ENCODE measurements at regions of chr11 and their contacts with region 1.

Region 1: DNA sequence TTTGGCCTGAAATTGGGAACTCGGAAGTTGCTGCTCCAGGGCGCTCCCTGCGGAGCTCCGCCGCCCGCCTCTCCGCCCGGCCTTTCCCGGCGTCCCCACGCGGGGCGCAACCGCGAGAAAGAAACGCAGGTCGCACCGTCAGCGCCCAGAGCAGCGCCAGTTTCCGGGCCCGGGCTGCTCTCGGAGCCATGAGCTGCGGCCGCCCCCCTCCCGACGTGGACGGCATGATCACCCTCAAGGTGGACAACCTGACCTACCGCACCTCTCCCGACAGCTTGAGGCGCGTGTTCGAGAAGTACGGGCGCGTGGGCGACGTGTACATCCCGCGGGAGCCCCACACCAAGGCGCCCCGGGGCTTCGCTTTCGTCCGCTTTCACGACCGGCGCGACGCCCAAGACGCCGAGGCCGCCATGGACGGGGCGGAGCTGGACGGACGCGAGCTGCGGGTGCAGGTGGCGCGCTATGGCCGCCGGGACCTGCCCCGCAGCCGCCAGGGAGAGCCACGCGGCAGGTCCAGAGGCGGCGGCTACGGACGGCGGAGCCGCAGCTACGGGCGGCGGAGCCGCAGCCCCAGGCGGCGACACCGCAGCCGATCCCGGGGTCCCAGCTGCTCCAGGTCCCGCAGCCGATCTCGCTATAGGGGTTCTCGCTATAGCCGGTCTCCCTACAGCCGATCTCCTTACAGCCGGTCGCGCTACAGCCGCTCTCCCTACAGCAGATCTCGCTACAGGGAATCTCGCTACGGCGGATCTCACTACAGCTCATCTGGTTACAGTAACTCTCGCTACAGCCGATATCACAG is 521 bp downstream of the SRSF8 start:
- DNase-seq: peak; percentile 53 to 88 (median 69)
- ATAC-seq: peak; percentile 63
- H3K4me3 ChIP-seq: peak overlapping the region; percentile 95
- H3K4me3 Mint-ChIP-seq: peak overlapping the region; percentile 98
- H3K27ac ChIP-seq: peak overlapping the region; percentile 87 to 90
- H3K27ac Mint-ChIP-seq: peak overlapping the region; percentile 99
- H3K4me1 ChIP-seq: peaks cover 12% of the 10 kb centered on the region
- H3K4me1 Mint-ChIP-seq: peaks cover 38% of the 10 kb centered on the region
- H3K27me3 ChIP-seq: no peaks in the 10 kb centered on the region
- H3K27me3 Mint-ChIP-seq: no peaks in the 10 kb centered on the region
- CTCF ChIP-seq: peak; percentile 60

Region 2: DNA sequence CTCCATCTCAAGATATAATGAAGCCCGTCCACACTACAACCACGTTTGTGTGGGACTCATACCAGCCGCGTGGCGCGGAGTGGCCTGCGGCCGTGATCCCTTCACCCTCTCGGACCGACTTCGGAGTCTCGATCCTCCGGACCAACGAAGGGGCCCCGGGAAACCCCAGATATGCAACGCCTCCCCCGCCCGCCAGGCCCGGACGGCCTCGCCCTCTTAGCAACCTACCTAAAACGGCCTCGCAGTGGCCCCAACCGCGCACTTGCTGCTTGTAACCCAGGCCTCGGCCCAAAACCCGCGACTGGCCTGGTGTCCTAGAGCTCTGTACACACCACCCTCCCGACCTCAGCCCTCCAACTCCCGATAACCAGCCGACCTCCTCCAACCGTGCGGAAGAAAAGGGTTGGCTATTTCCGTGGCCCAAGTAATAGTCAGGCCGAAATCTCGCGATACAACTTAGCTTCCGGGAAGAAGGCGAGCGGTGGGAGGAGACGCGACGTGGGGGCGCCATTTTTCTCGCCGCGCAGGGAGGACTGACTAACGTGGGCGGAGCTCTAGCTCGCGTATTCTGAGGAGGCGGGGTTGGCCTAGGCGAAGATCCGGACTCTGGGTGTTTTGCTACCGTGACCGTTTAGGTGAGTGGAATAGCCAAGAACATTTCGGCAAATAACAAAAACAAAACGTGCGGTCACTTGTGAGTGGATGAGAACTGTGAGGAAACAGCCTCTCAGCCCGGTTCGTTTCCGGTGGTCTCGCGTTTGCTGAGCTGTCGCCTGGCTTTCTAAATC is 1326.0 kb before region 1 on chr11 and contains the starts of genes C11orf54 and TAF1D:
- CTCF ChIA-PET with region 1: no interaction called
- POLR2A ChIA-PET with region 1: interaction called, 14 read pairs
- intact Hi-C with region 1: no loop called
- DNase-seq: peak; percentile 92 to 99 (median 96)
- ATAC-seq: peak; percentile 90
- H3K4me3 ChIP-seq: peak within 1 kb of the TSS; percentile 88
- H3K4me3 Mint-ChIP-seq: peak within 1 kb of the TSS; percentile 98
- H3K27ac ChIP-seq: peak within 1 kb of the TSS; percentile 95 to 97
- H3K27ac Mint-ChIP-seq: peak within 1 kb of the TSS; percentile 98
- H3K4me1 ChIP-seq: peaks cover 22% of the 10 kb centered on the region
- H3K4me1 Mint-ChIP-seq: peaks cover 76% of the 10 kb centered on the region
- H3K27me3 ChIP-seq: no peaks in the 10 kb centered on the region
- H3K27me3 Mint-ChIP-seq: no peaks in the 10 kb centered on the region
- CTCF ChIP-seq: no peak
- total RNA-seq, gene C11orf54: 6.8 to 8.0 TPM
- total RNA-seq, gene TAF1D: 161 to 173 TPM

Region 3: DNA sequence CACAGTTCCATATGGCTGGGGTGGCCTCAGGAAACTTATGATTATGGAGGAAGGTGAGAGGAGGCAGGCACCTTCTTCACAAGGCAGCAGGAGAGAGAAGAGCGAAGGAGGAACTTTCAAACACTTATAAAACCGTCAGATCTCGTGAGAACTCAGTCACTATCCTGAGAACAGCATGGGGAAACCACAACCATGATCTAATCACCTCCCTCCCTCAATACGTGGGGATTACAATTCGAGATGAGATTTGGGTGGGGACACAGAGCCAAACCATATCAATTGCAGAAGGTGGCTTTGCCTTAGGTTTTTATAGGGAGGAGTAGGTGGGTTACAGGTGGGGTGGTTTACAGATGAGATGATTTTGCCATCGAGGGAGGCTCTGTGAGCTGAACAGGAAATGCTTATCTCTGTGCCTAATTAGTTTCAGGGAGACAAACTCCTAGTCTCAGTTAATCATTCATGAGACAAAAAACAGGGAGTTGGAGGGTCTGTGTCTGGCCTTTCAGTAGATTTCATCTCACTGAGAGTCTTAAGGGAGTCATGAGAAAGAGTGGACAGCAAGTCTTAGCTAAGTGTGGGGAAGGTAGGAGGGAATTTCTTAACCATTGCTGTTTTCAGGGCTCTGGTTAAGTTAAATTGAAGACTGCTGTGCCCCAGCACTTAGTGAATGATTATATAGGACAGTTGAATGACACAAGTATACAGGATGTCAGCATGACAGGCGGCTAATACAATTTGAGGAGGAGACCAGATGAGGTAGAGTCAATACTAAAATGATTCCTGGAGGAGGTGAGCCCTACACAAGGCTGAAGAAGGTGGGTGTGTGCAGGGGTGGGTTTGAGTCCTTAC is 141.6 kb before region 1 on chr11:
- CTCF ChIA-PET with region 1: no interaction called
- POLR2A ChIA-PET with region 1: interaction called, 28 read pairs
- intact Hi-C with region 1: no loop called
- DNase-seq: peak in 2 of 14 experiments; percentile 20 to 35
- ATAC-seq: peak; percentile 27
- H3K4me3 ChIP-seq: no peak overlapping the region
- H3K4me3 Mint-ChIP-seq: peak overlapping the region; percentile 47
- H3K27ac ChIP-seq: peak overlapping the region in 1 of 2 donors; percentile 71
- H3K27ac Mint-ChIP-seq: peak overlapping the region; percentile 91
- H3K4me1 ChIP-seq: peaks cover 44% of the 10 kb centered on the region
- H3K4me1 Mint-ChIP-seq: peaks cover 73% of the 10 kb centered on the region
- H3K27me3 ChIP-seq: no peaks in the 10 kb centered on the region
- H3K27me3 Mint-ChIP-seq: no peaks in the 10 kb centered on the region
- CTCF ChIP-seq: no peak

Region 4: GRCh38 chr11:95089620-95090542 is 22.6 kb after region 1 on chr11 and contains the start of gene ENDOD1:
- CTCF ChIA-PET with region 1: interaction called, 67 read pairs
- POLR2A ChIA-PET with region 1: interaction called, 266 read pairs
- intact Hi-C with region 1: loop called (anchors 1 kb)
- DNase-seq: peak; percentile 70 to 94 (median 84)
- ATAC-seq: peak; percentile 94
- H3K4me3 ChIP-seq: peak within 1 kb of the TSS; percentile 78
- H3K4me3 Mint-ChIP-seq: peak within 1 kb of the TSS; percentile 92
- H3K27ac ChIP-seq: peak within 1 kb of the TSS; percentile 77 to 84
- H3K27ac Mint-ChIP-seq: peak within 1 kb of the TSS; percentile 95
- H3K4me1 ChIP-seq: peaks cover 34% of the 10 kb centered on the region
- H3K4me1 Mint-ChIP-seq: peaks cover 50% of the 10 kb centered on the region
- H3K27me3 ChIP-seq: no peaks in the 10 kb centered on the region
- H3K27me3 Mint-ChIP-seq: no peaks in the 10 kb centered on the region
- CTCF ChIP-seq: no peak
- total RNA-seq, gene ENDOD1: 3.8 to 4.4 TPM

Region 5: GRCh38 chr11:95705485-95706124 is 638.4 kb after region 1 on chr11:
- CTCF ChIA-PET with region 1: interaction called, 12 read pairs
- POLR2A ChIA-PET with region 1: interaction called, 21 read pairs
- intact Hi-C with region 1: loop called (anchors 5 to 10 kb)
- DNase-seq: peak; percentile 76 to 93 (median 85)
- ATAC-seq: peak; percentile 92
- H3K4me3 ChIP-seq: no peak overlapping the region
- H3K4me3 Mint-ChIP-seq: no peak overlapping the region
- H3K27ac ChIP-seq: peak overlapping the region; percentile 33 to 54
- H3K27ac Mint-ChIP-seq: no peak overlapping the region
- H3K4me1 ChIP-seq: peaks cover 33% of the 10 kb centered on the region
- H3K4me1 Mint-ChIP-seq: peaks cover 11% of the 10 kb centered on the region
- H3K27me3 ChIP-seq: no peaks in the 10 kb centered on the region
- H3K27me3 Mint-ChIP-seq: no peaks in the 10 kb centered on the region
- CTCF ChIP-seq: peak; percentile 94

Region 6: DNA sequence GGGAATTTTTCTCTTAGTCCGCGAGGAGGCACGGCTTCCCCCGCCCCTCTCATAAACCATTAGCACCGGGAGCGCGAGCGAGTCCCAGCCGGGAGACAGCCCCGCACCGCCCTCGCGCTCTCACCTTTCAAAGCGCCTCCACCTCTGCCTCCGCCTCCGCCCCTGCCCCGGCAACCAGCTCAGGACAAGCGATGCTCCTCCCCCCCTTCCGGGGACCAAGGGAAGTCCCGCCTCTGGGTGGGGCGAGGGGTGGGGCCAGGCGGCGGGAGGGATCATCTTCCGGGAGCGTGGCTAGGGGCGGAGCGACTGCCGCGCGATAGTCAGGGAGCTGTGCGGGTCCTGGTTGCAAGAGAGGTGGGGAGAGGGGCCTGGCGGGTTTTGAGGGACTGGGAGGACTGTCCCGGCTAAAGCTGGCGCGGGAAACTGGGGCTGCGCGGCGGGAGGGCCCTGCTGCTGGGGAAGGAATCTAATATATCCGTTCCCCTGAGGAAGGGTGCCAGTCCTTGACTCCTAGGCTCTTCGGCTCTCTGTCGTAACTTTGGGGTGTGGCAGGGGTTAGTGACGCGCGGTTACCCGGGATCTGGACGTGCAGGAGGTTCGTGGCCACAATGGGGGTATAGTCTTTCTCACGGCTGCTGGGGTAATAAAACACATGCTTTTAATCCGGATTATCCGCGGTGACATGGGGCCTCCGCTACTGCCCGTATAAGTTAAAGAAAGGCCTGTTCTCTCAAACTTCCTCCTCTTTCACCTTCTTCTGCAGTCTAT is 1322.7 kb after region 1 on chr11 and contains the starts of genes CCDC82 and JRKL:
- CTCF ChIA-PET with region 1: interaction called, 3 read pairs
- POLR2A ChIA-PET with region 1: interaction called, 13 read pairs
- intact Hi-C with region 1: loop called in 1 of 2 experiments (anchors 5 kb)
- DNase-seq: peak; percentile 96 to 99 (median 98)
- ATAC-seq: peak; percentile 96
- H3K4me3 ChIP-seq: peak within 1 kb of the TSS; percentile 86
- H3K4me3 Mint-ChIP-seq: peak within 1 kb of the TSS; percentile 91
- H3K27ac ChIP-seq: peak within 1 kb of the TSS; percentile 84
- H3K27ac Mint-ChIP-seq: peak within 1 kb of the TSS; percentile 88
- H3K4me1 ChIP-seq: peaks cover 18% of the 10 kb centered on the region
- H3K4me1 Mint-ChIP-seq: peaks cover 51% of the 10 kb centered on the region
- H3K27me3 ChIP-seq: no peaks in the 10 kb centered on the region
- H3K27me3 Mint-ChIP-seq: no peaks in the 10 kb centered on the region
- CTCF ChIP-seq: no peak
- total RNA-seq, gene CCDC82: 23.7 to 24.4 TPM
- total RNA-seq, gene JRKL: 3.0 to 3.5 TPM

Measured in CD4-positive, alpha-beta T cell (primary cell).